Caco-2 (cell line): ENCODE measurements at regions of chr4 and their contacts with region 1.

Region 1: DNA sequence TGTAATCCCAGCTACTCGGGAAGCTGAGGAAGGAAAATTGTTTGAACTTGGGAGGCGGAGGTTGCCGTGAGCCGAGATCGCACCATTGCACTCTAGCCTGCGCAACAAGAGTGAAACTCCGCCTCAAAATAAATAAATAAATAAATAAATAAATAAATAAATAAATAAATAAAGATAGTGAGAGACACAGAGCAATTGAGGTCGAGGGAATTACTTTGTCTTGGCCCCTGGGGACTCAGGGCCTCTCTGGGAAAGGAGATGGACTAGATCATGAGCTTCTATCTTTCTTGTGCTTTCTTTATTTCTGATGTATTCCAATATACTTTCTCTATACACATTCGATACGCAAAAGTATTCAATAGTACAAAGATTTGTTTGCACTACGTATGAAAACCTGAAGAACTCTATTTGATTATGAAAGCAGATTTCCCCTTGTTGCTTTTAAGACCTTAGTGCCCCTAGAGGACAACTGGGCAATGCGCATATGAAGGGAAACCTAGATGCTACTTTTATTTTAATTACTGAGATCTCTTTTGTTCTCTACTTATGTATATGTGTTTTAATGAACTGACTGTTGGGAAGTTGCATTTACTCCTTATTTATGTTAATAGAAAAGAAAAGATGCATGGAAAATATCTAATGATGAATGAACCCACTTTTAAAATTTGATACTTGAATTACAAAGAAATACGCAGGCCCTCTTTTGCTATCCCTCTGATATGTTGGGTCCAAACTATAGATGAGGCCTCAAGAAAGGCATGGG is 12.8 kb upstream of the ELOVL6 start:
- DNase-seq: peak; percentile 32 to 36
- H3K4me3 ChIP-seq: no peak overlapping the region
- H3K4me3 Mint-ChIP-seq: no peak overlapping the region
- H3K27ac Mint-ChIP-seq: no peak overlapping the region
- H3K4me1 ChIP-seq: no peaks in the 10 kb centered on the region
- H3K4me1 Mint-ChIP-seq: no peaks in the 10 kb centered on the region
- H3K27me3 ChIP-seq: no peaks in the 10 kb centered on the region
- H3K27me3 Mint-ChIP-seq: no peaks in the 10 kb centered on the region
- CTCF ChIP-seq: peak; percentile 49 to 79

Region 2: DNA sequence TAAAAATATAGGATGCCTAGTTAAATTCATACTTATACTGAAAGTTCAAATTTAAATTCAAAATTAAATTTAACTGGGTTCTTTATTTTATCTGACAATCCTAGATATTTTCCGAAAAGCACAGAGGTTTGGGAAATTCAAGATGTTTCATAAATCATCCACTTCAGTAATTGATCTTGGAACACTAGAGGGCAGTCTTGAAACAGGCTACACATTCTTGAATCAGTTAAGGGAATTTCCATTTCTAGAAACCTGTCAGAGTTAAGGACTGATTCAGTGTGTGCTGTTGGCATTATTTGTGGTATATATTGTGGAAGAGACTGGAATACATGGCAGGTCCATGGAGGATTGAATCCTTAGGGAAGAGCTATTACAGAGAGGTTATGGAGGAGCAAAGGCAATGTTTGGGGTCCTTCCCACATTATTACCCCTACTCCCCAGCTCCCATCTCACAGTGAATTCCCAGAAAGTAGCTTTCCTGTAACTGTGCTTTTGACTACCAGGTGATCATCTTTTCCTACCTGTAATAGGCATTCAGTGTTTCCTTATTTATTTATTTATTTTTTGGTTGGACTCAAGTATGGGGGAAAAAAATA is 205.6 kb before region 1 on chr4:
- CTCF ChIA-PET with region 1: no interaction called
- POLR2A ChIA-PET with region 1: no interaction called
- intact Hi-C with region 1: loop called (anchors 1 kb)
- DNase-seq: peak in 1 of 2 experiments; percentile 41
- H3K4me3 ChIP-seq: no peak overlapping the region
- H3K4me3 Mint-ChIP-seq: no peak overlapping the region
- H3K27ac Mint-ChIP-seq: no peak overlapping the region
- H3K4me1 ChIP-seq: no peaks in the 10 kb centered on the region; the same call in 1 of the 2 replicates
- H3K4me1 Mint-ChIP-seq: peaks cover 7% of the 10 kb centered on the region
- H3K27me3 ChIP-seq: no peaks in the 10 kb centered on the region
- H3K27me3 Mint-ChIP-seq: no peaks in the 10 kb centered on the region
- CTCF ChIP-seq: peak; percentile 50 to 61

Region 3: DNA sequence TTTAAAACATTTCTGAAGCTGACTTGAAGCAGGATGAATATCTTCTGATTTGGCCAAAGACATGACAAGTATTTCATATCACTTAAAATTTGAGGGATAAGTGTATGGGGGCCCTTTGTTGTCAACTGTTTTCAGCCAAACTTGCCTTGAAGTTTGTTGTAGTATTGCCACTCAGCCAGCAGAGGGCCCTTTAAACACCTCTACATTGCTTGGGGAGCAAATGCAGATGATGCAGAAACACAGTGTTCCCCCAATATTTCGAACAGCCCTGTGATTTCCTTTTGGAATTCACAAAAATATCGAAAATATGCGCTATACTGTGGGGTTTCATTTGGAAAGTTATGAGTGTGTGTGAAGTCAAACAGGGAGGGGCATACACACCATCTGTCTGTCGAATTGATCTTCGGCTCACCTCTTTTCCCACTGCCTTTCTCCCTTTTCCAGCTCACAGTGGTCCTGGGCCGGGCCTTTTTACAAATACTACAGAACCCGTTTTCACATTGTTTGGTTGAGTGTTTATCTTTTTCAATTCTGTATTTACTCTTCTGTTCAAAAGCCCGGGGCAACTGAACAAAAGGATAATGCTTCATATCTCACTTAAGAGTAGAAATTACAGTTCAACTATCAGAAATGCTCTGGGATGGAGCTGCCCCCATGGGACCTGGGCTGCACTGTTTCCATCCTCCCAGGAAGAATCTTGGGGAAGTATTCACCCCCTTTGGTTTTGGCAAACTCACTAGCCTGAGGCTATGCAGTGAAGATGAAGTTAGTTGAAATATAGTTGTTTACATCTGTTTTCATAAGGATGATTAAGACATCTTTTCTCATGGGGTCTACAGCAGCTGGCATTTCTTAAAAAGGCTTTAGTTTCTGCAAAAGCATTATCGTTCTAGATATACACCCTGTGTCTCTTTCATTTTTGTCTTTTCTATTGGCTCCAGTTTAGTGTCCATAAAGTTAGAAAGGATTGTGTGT is 160.9 kb before region 1 on chr4:
- CTCF ChIA-PET with region 1: no interaction called
- POLR2A ChIA-PET with region 1: no interaction called
- intact Hi-C with region 1: loop called (anchors 1 kb)
- DNase-seq: peak in 1 of 2 experiments; percentile 39
- H3K4me3 ChIP-seq: no peak overlapping the region
- H3K4me3 Mint-ChIP-seq: no peak overlapping the region
- H3K27ac Mint-ChIP-seq: no peak overlapping the region
- H3K4me1 ChIP-seq: no peaks in the 10 kb centered on the region
- H3K4me1 Mint-ChIP-seq: no peaks in the 10 kb centered on the region
- H3K27me3 ChIP-seq: no peaks in the 10 kb centered on the region
- H3K27me3 Mint-ChIP-seq: no peaks in the 10 kb centered on the region
- CTCF ChIP-seq: peak; percentile 70 to 81

Region 4: GRCh38 chr4:110172972-110173371 is 38.2 kb before region 1 on chr4:
- CTCF ChIA-PET with region 1: no interaction called
- POLR2A ChIA-PET with region 1: no interaction called
- intact Hi-C with region 1: no loop called
- DNase-seq: peak; percentile 27 to 66
- H3K4me3 ChIP-seq: no peak overlapping the region
- H3K4me3 Mint-ChIP-seq: no peak overlapping the region
- H3K27ac Mint-ChIP-seq: peak overlapping the region; percentile 25
- H3K4me1 ChIP-seq: peaks cover 24% of the 10 kb centered on the region
- H3K4me1 Mint-ChIP-seq: peaks cover 15% of the 10 kb centered on the region
- H3K27me3 ChIP-seq: no peaks in the 10 kb centered on the region
- H3K27me3 Mint-ChIP-seq: no peaks in the 10 kb centered on the region
- CTCF ChIP-seq: no peak

Region 5: GRCh38 chr4:110516106-110516922 is 305.1 kb after region 1 on chr4:
- CTCF ChIA-PET with region 1: no interaction called
- POLR2A ChIA-PET with region 1: no interaction called
- intact Hi-C with region 1: loop called (anchors 5 kb)
- DNase-seq: peak; percentile 78
- H3K4me3 ChIP-seq: no peak overlapping the region
- H3K4me3 Mint-ChIP-seq: peak overlapping the region; percentile 64
- H3K27ac Mint-ChIP-seq: no peak overlapping the region
- H3K4me1 ChIP-seq: no peaks in the 10 kb centered on the region
- H3K4me1 Mint-ChIP-seq: no peaks in the 10 kb centered on the region
- H3K27me3 ChIP-seq: no peaks in the 10 kb centered on the region
- H3K27me3 Mint-ChIP-seq: no peaks in the 10 kb centered on the region
- CTCF ChIP-seq: peak; percentile 78 to 82